Activated CD4-positive, alpha-beta memory T cell treated with anti-CD3 and anti-CD28 coated beads, Interleukin-2, amount 10 ng/mL, durations not matched to agents 7 days and 5 days (primary cell): ENCODE measurements at regions of chr7 and their contacts with region 1.

Region 1: DNA sequence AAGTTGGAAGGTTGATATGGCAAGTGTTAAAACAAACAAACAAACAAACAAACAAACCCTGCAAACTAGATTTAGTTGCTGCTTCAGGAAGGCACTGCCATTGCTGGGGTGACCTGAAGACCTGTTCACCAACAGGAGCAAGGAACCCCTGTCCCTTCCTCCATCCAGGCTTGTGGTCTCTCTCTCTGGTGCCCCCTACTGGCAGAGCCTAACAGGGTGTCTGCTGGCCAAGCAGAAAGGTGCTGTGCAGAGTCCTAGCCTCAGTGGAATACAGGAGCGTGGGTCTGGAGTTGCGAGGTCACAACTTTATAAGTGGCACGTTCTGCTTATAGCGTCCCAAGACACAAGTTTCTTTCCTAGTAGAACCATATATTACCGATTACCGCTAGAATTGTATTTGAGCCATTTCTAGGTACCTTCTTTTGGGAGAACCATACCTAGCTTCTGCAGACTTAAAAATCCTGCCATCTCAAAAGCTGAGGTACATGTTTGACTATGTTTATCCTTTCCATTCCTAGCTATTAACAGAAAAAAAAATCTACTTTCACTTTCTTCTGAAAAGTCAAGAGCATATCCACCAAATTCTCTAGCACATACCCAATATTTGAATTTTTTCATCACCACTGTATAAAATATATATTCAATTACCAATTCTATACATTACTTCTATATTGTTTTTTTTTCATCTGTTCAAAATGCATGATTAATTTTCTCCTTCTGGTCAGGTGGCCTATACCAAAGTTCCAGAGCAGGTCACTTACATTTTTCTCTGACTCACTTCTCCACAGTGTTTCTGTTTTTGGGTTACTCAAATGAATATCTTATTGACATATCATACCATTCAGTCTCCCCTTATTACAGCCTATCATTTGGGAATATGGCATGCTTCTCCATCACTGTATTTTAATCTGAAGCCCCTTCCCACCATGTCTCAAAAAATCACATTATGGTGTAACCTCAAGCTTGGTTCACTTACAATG is 29.1 kb upstream of the CALD1 start:
- DNase-seq: peak; percentile 66
- H3K4me3 Mint-ChIP-seq: no peak overlapping the region
- H3K27ac Mint-ChIP-seq: no peak overlapping the region
- H3K4me1 Mint-ChIP-seq: peaks cover 8% of the 10 kb centered on the region
- H3K27me3 Mint-ChIP-seq: no peaks in the 10 kb centered on the region

Region 2: GRCh38 chr7:134724606-134725005 is 25.8 kb before region 1 on chr7:
- CTCF ChIA-PET with region 1: interaction called, 19 read pairs
- POLR2A ChIA-PET with region 1: no interaction called
- DNase-seq: no peak
- H3K4me3 Mint-ChIP-seq: no peak overlapping the region
- H3K27ac Mint-ChIP-seq: no peak overlapping the region
- H3K4me1 Mint-ChIP-seq: no peaks in the 10 kb centered on the region
- H3K27me3 Mint-ChIP-seq: no peaks in the 10 kb centered on the region